ENCODE measurements at regions of chr5 and their contacts with region 1.

Region 1: GRCh38 chr5:98891591-98891990 is 37.2 kb downstream of the CHD1 start:
- DNase-seq: no peak
- ATAC-seq: no peak
- H3K4me3 Mint-ChIP-seq: no peak overlapping the region
- H3K27ac Mint-ChIP-seq: no peak overlapping the region
- H3K4me1 Mint-ChIP-seq: no peaks in the 10 kb centered on the region
- H3K27me3 Mint-ChIP-seq: no peaks in the 10 kb centered on the region

Region 2: GRCh38 chr5:98880151-98880550 is 11.4 kb before region 1 on chr5:
- CTCF ChIA-PET with region 1: interaction called, 4 read pairs
- POLR2A ChIA-PET with region 1: no interaction called
- intact Hi-C with region 1: loop called in 1 of 2 experiments (anchors 1 kb)
- DNase-seq: peak; percentile 41
- ATAC-seq: peak; percentile 88
- H3K4me3 Mint-ChIP-seq: no peak overlapping the region
- H3K27ac Mint-ChIP-seq: peak overlapping the region; percentile 25
- H3K4me1 Mint-ChIP-seq: peaks cover 16% of the 10 kb centered on the region
- H3K27me3 Mint-ChIP-seq: no peaks in the 10 kb centered on the region

Region 3: GRCh38 chr5:99004960-99005359 is 113.4 kb after region 1 on chr5:
- CTCF ChIA-PET with region 1: no interaction called
- POLR2A ChIA-PET with region 1: no interaction called
- intact Hi-C with region 1: no loop called
- DNase-seq: peak; percentile 34
- ATAC-seq: peak; percentile 100
- H3K4me3 Mint-ChIP-seq: no peak overlapping the region
- H3K27ac Mint-ChIP-seq: no peak overlapping the region
- H3K4me1 Mint-ChIP-seq: peaks cover 14% of the 10 kb centered on the region
- H3K27me3 Mint-ChIP-seq: no peaks in the 10 kb centered on the region

Region 4: GRCh38 chr5:99191206-99191745 is 299.7 kb after region 1 on chr5:
- CTCF ChIA-PET with region 1: no interaction called
- POLR2A ChIA-PET with region 1: no interaction called
- intact Hi-C with region 1: no loop called
- DNase-seq: no peak
- ATAC-seq: no peak
- H3K4me3 Mint-ChIP-seq: no peak overlapping the region
- H3K27ac Mint-ChIP-seq: no peak overlapping the region
- H3K4me1 Mint-ChIP-seq: no peaks in the 10 kb centered on the region
- H3K27me3 Mint-ChIP-seq: peaks cover 3% of the 10 kb centered on the region

Measured in activated CD4-positive, alpha-beta T cell treated with anti-CD3 and anti-CD28 coated beads for 36 hours (primary cell).